ENCODE measurements at regions of chrX and their contacts with region 1.

Region 1: GRCh38 chrX:101415180-101416145 is 7.4 kb downstream of the HNRNPH2 start:
- DNase-seq: no peak
- H3K4me3 ChIP-seq: no peak overlapping the region
- H3K27ac ChIP-seq: peak overlapping the region; percentile 50 to 91 (median 88)
- H3K4me1 ChIP-seq: peaks cover 0 to 63% (median 20%) of the 10 kb centered on the region in 4 donors
- H3K27me3 ChIP-seq: no peaks in the 10 kb centered on the region
- CTCF ChIP-seq: peak; percentile 23 to 62 (median 45)
- EP300 ChIP-seq: no peak
- POLR2A ChIP-seq: no peak

Region 2: DNA sequence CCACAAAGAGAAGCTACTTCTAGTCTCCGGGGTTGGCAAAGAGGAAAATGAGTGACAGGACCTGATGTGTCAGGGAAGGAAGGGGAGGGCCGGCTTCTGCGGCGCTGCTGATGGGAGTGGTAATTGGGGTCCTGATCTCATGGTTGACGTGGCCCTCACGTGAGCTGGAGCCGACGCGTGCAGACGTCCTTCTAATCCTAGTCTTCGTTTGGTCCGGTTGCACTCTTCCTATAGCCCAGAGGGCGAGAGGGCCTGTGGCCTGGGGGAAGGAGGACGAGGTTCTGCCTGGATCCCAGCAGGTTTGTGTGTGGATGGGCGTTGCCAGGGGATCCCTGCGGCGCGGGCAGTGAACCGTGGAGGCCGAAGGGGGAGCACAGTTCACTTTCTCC is 134.9 kb after region 1 on chrX and contains the start of gene ARMCX1:
- intact Hi-C with region 1: loop called (anchors 5 kb)
- DNase-seq: peak; percentile 90
- H3K4me3 ChIP-seq: peak within 1 kb of the TSS; percentile 44 to 62 (median 58)
- H3K27ac ChIP-seq: peak within 1 kb of the TSS; percentile 86 to 89 (median 88)
- H3K4me1 ChIP-seq: peaks cover 0 to 9% (median 2%) of the 10 kb centered on the region in 4 donors
- H3K27me3 ChIP-seq: no peaks in the 10 kb centered on the region
- CTCF ChIP-seq: no peak
- EP300 ChIP-seq: no peak
- POLR2A ChIP-seq: peak; percentile 36 to 61
- total RNA-seq, gene ARMCX1: 49.1 to 73.1 (median 60.7) TPM

Region 3: GRCh38 chrX:101759000-101759399 is 343.5 kb after region 1 on chrX:
- intact Hi-C with region 1: loop called (anchors 5 kb)
- DNase-seq: no peak
- H3K4me3 ChIP-seq: no peak overlapping the region
- H3K27ac ChIP-seq: no peak overlapping the region
- H3K4me1 ChIP-seq: no peaks in the 10 kb centered on the region
- H3K27me3 ChIP-seq: no peaks in the 10 kb centered on the region
- CTCF ChIP-seq: peak in 2 of 4 experiments; percentile 16 to 34
- EP300 ChIP-seq: no peak
- POLR2A ChIP-seq: no peak

Region 4: DNA sequence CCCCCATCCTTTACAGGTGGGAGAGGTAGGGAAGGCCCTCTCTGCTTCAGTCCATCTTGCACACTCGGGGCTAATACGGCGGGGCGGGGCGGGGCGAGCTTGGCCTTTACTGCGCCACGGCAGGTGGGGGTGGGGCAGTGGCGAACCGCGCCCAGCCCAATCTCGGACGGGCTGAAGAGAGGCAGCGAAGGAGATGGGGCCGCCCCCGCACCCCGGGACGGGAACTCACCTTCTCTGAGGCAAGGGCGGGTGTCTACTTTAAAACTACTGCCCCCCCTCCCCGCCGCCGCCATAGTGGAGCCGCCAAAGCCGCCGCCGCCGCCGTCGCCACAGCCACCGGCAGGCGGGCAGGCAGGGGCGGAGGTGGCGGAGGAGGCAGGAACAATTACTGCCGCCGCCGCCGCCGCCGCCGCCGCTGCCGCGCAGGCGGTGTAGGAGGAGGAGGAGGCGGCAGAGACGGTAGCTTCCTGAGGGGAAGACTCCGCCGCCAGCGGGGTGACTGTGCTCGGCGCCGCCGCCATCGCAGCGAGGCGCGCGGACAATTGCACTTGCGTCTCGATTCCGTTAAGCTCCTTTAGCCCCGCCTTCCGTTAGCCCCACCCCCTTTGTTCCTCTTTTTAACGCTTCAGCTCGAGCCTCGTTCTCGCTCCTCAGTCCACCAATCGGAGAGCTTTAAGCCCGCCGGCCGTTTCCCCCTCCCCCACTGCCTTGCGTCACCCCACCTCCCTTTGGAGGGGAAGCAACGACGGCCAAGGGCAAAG is 516.2 kb after region 1 on chrX and contains the start of gene ZMAT1:
- intact Hi-C with region 1: loop called (anchors 10 kb)
- DNase-seq: peak; percentile 97
- H3K4me3 ChIP-seq: peak within 1 kb of the TSS; percentile 57 to 84 (median 78)
- H3K27ac ChIP-seq: peak within 1 kb of the TSS; percentile 93 to 98 (median 95)
- H3K4me1 ChIP-seq: peaks cover 0 to 7% (median 0%) of the 10 kb centered on the region in 4 donors
- H3K27me3 ChIP-seq: peaks cover 0 to 3% (median 0%) of the 10 kb centered on the region in 3 donors
- CTCF ChIP-seq: no peak
- EP300 ChIP-seq: peak in 1 of 4 donors; percentile 22
- POLR2A ChIP-seq: peak; percentile 79 to 84
- total RNA-seq, gene ZMAT1: 7.9 to 13.5 (median 12.3) TPM